Posterior vena cava (tissue), 2 donors: ENCODE measurements at regions of chr4 and their contacts with region 1.

Region 1: DNA sequence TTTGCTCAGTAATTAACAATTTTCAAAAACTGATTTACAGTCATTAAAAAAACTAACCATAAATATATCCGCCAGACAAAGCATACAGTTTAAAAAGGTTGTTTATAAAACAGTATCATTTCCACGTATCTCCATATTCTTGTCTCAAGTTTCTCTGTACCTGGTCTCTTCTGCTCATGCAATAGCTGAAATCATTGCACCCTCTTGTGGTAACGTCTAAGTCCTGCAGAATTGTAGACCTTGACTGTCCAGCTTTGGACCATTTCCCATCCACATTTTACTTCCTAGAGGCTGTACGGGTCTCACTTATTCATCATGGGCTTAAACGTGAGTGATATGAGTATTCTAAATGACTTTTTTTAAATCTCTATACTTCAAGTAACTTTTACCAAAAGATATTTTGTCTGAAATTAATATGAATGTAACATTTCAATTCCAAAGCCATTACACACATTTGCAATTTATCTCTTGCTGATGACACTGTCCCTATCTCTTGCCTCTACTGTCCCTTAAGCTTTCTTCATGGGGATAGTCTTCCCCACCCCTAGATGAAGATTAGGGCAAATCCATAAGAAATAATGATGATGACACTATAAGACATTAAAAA is 118.5 kb downstream of the BTC start:
- DNase-seq: no peak

Region 2: DNA sequence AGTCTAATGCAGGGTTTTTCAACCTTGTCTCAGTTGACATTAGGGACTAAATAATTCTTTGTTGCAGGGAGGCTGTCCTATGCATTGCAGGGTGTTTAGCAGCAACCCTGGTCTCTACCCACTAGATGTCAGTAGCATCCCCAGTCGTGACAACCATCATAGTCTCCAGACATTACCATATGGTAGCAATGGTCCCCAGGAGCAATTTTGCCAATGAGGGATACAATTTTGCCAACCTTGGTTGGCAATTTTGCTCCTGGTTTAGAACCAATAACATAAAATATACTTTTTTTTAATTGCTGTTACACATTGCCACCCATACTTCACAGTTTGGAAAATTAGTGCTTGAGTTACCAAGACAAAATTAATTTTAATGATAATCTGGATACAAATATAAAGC is 304.9 kb before region 1 on chr4:
- intact Hi-C with region 1: loop called (anchors 5 to 10 kb)
- DNase-seq: no peak

Region 3: DNA sequence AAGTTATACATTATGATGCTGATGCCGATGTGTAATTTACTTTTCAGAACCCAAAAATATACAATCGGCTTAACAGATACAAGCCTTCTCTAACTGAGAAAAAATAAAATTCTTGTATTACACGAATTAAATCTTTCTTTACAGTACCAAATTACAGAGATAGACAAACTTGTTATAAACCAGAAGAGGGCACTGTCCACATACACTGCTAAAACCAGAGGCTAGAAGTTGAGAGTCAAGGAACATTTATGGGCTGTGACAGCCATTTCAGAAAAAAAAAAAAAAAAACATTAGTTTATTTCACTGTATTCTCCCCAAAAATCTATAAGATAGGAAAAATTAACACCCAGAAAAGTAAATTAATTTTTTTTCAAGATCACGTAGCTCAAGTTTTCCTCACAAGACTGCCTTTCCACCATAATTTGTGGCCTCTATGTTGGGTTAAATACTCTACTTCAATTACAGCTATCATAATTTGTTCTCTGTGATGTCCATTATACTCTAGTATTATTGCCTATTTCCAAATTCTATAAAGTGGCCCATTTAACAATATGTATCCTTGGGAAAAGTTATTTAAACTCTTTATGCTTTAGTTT is 298.8 kb before region 1 on chr4:
- intact Hi-C with region 1: loop called (anchors 5 to 10 kb)
- DNase-seq: no peak

Region 4: DNA sequence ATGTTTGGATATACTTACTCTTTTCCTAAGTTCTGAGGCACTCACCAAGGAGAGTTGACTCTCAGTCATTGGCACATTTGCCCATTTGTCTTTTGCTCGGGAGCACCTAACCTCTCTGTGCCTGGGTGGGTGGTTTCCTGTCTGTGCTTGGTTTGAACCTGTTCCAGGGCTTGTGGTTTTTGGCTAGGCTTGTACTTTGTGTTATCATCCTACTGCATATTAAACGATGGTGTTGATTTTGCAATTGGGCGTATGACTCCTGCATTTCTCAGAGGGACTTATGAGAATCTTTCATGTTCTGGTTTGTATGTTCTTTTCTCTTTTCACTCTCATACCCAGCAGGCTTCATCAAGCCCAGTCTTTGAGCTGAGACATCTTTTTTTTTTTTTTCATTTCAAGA is 43.1 kb before region 1 on chr4:
- intact Hi-C with region 1: no loop called
- DNase-seq: peak; percentile 71